Left cardiac atrium (tissue), 4 donors: ENCODE measurements at regions of chr5 and their contacts with region 1.

Region 1: DNA sequence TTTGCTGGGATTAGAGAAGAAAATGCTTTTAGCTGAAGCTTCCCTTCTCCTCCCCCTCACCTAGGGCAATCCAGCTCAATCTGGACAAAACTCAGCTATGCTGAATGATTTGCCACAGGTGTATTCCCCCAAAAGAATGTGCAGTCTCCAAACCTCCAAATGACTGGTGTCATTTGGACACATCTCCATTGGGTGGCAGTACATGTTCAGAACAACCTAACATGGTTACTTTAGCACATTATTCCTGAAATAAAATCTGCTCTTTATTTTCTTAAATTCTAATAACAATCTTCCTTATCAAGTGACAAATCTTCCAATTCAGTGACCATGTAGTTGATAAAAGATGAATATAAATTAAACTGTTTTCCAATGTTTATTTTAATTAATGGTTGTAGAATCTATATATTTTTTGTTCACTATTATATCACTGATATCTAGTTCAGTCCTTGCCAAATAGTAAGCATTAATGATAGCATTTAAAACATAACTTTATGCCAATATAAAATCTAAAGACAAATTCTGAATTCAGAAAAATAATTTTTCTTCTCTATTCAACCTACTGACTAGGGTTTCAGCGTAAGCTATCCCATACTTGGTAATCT is 61.3 kb upstream of the MOCS2 start:
- DNase-seq: no peak
- ATAC-seq: peak in 1 of 2 donors; percentile 43

Region 2: GRCh38 chr5:53560506-53561191 is 389.8 kb after region 1 on chr5 and contains the start of gene NDUFS4:
- intact Hi-C with region 1: no loop called
- DNase-seq: peak; percentile 91
- ATAC-seq: peak; percentile 97 to 98
- total RNA-seq, gene NDUFS4: 114 to 136 TPM

Region 3: GRCh38 chr5:54217826-54218503 is 1047.1 kb after region 1 on chr5:
- intact Hi-C with region 1: loop called in 1 of 2 experiments (anchors 5 kb)
- DNase-seq: no peak
- ATAC-seq: peak; percentile 79 to 83

Region 4: DNA sequence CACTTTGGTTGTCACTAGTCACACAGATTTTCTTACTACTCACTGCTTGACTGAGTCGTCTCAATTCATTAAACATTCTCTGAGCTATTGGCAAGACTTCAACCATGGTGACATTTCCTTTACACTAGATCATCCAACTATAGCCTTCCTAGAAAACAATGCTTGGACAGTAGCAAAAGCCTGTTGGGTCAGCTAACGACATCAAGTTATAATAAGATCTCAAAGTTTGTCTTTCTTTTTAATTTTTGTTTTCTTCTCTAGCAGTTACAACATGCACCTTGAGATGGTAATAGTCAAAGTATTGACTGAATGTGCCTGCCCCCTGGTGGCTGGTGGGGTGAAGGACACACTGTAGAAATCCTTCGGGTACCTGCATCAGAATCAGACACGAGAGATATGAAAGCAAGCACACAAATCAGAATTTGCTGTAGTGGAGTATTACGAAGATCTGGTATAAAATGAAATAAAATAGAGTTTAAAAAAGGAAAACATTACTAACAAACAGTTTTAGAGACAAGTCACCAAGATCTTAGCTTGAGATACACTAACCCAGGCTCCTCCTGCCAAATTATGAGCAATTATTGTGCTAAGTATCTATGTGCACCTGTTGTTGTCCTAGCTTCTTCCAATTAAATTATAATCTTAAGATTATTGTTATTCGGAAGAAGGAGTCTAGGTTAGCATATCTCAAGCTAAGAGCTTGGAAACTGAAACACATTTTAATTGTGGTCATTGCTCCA is 1058.4 kb after region 1 on chr5:
- intact Hi-C with region 1: loop called in 1 of 2 experiments (anchors 5 kb)
- DNase-seq: peak; percentile 65
- ATAC-seq: peak; percentile 66 to 80